Activated T-helper 1 cell treated with anti-CD3 and anti-CD28 coated beads, Interleukin-12 subunit alpha, Interleukin-12 subunit beta, Interleukin-2, Interleukin-4 antibody, amounts not matched to agents 30 ng/mL and 10 ng/mL and 1 ng/mL, durations not matched to agents 14 hours and 24 hours and 36 hours (primary cell): ENCODE measurements at regions of chrX and their contacts with region 1.

Region 1: DNA sequence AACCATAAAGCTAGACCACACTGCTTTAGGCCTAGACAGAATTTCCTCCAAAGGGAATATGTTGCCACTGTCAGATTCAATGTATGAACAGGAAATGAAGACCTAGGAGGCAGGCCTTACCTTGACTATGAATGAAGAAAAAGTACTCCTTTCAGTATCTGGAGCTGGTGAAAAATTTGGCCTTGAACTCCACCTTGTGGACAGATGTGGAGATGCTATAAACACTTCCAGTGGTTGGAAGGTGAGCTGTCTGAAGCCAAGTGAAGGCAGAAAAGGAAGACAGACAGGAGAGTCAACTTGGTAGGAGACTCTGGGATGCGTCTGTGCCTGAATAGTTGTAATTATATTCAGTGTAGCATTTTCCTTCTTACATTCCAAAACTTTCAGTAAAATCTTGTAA is 17.2 kb downstream of the SPIN3 start:
- DNase-seq: peak; percentile 22
- H3K4me3 Mint-ChIP-seq: no peak overlapping the region
- H3K27ac Mint-ChIP-seq: no peak overlapping the region
- H3K4me1 Mint-ChIP-seq: peaks cover 10% of the 10 kb centered on the region
- H3K27me3 Mint-ChIP-seq: no peaks in the 10 kb centered on the region

Region 2: DNA sequence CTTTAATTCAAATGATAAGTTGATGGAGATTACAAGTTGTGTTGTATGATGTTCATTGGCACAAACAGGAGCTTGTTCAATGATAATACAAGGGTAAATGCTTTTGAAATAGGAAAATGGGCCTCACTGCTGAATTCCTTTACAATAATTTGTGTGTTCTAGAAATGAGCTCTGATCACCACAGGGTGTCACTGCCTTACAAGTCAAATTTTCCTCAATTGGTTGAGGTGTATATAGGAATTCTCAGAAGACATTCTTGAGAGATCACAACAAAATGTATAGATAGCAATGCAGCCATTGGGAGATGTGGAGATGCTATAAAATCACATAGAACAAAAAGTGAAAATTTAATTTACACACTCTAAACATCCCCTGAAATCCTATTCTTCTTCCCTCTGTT is 696.4 kb before region 1 on chrX:
- intact Hi-C with region 1: loop called (anchors 5 kb)
- DNase-seq: peak; percentile 1
- H3K4me3 Mint-ChIP-seq: no peak overlapping the region
- H3K27ac Mint-ChIP-seq: no peak overlapping the region
- H3K4me1 Mint-ChIP-seq: peaks cover 11% of the 10 kb centered on the region
- H3K27me3 Mint-ChIP-seq: no peaks in the 10 kb centered on the region

Region 3: DNA sequence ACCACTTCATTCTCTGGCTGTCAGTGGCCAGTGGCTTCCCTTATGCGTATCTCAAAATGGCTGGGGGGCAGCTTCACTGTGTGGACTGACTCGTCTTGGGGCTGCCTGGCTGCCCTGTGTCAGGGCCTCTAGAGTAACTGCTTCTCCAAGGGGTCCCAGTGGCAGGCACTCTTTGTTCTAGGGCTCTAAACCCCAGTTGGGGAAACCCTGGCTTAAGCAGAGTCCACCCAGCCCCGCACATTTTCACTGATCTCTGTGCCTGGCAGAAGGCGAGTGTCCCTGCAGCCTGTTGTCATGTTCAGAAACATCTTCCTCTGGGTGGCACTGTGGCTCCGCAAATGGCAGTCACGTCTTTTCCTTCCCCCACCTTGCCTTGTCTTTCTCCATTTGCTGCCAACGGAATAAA is 189.5 kb before region 1 on chrX:
- intact Hi-C with region 1: loop called (anchors 1 kb)
- DNase-seq: no peak
- H3K4me3 Mint-ChIP-seq: no peak overlapping the region
- H3K27ac Mint-ChIP-seq: no peak overlapping the region
- H3K4me1 Mint-ChIP-seq: peaks cover 22% of the 10 kb centered on the region
- H3K27me3 Mint-ChIP-seq: no peaks in the 10 kb centered on the region

Region 4: DNA sequence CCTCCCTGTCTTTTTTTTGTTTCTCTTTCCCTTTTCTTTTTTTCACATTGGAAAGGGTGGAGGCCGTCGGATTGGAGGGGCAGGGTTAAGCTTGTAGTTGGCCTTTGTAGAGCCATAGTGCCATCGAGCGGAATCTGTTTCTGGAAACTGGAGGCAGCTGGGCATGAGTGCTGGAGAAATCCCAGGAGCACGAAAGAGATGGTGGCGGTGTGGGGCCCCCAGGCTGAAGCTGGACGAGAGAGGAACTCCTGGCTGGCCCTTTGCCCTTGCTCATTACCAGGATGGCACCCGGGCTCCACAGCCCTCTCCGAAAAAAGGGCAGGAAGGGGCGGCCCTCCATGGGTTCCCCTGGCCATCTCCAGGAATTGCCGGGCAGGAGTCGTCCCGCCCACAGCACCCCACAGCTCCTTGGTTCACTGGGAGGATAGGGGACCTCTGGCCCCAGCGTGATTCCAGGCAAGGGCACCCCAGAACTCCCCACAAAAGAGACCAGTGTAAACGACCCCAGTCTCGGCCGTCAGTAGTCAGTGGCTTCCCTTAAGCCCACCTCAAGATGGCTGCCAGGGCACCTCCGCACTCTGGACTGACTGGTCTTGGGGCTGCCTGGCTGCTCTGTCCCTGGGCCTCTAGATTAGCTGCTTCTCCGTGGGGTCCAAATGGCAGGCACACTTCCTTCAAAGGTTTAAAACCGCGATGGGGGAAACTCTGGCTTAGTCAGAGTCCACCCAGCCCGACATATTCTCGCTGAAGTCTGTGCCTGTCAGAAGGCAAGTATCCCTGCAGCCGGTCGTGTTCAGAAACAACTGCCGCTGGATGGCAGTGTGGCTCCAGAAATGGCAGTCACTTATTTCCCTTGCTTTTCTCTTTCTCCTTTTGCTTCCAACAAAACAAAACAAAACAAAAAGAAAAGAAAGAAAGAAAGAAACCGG is 175.0 kb before region 1 on chrX:
- intact Hi-C with region 1: loop called (anchors 1 kb)
- DNase-seq: peak; percentile 24
- H3K4me3 Mint-ChIP-seq: peak overlapping the region; percentile 26
- H3K27ac Mint-ChIP-seq: peak overlapping the region; percentile 18
- H3K4me1 Mint-ChIP-seq: peaks cover 29% of the 10 kb centered on the region
- H3K27me3 Mint-ChIP-seq: no peaks in the 10 kb centered on the region

Region 5: GRCh38 chrX:56813318-56813837 is 164.8 kb before region 1 on chrX:
- intact Hi-C with region 1: no loop called
- DNase-seq: peak; percentile 32
- H3K4me3 Mint-ChIP-seq: peak overlapping the region; percentile 80
- H3K27ac Mint-ChIP-seq: peak overlapping the region; percentile 97
- H3K4me1 Mint-ChIP-seq: peaks cover 38% of the 10 kb centered on the region
- H3K27me3 Mint-ChIP-seq: no peaks in the 10 kb centered on the region